ENCODE measurements at regions of chr16 and their contacts with region 1.

Region 1: DNA sequence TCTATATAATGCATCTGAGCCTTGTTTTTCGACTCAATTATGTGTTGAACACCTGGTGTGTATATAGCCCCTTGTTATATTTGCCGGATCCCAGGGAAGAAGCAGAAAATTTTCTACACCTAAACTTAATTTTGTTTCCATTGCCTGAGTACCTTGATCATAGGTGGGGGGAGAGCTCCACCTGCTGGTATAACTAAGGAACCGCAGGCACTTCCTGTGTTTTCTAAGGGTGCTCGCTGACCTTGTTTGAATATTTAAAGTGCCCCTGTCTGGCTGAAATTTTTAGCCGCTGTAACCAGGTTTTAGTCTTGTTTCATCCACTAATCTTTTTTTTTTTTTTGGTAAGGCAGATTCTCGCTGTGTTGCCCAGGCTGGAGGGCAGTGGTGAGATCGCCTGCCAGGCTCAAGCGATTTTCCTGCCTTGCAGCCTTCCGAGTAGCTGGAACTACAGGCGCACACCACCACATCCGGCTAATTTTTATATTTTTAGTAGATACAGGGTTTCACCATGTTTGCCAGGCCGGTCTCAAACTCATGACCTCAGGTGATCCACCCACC is 6.5 kb upstream of the NUBP1 start:
- DNase-seq: peak; percentile 74
- ATAC-seq: peak; percentile 70
- H3K4me3 ChIP-seq: peak overlapping the region; percentile 60
- H3K27ac ChIP-seq: no peak overlapping the region
- H3K4me1 ChIP-seq: peaks cover 13% of the 10 kb centered on the region
- H3K27me3 ChIP-seq: no peaks in the 10 kb centered on the region
- CTCF ChIP-seq: peak; percentile 83

Region 2: GRCh38 chr16:10314811-10315210 is 422.3 kb before region 1 on chr16:
- CTCF ChIA-PET with region 1: no interaction called
- POLR2A ChIA-PET with region 1: no interaction called
- intact Hi-C with region 1: loop called (anchors 5 kb)
- DNase-seq: peak; percentile 36
- ATAC-seq: peak; percentile 27; the same call in 1 of the 2 replicates
- H3K4me3 ChIP-seq: no peak overlapping the region
- H3K27ac ChIP-seq: no peak overlapping the region
- H3K4me1 ChIP-seq: no peaks in the 10 kb centered on the region
- H3K27me3 ChIP-seq: no peaks in the 10 kb centered on the region
- CTCF ChIP-seq: peak; percentile 48

Region 3: DNA sequence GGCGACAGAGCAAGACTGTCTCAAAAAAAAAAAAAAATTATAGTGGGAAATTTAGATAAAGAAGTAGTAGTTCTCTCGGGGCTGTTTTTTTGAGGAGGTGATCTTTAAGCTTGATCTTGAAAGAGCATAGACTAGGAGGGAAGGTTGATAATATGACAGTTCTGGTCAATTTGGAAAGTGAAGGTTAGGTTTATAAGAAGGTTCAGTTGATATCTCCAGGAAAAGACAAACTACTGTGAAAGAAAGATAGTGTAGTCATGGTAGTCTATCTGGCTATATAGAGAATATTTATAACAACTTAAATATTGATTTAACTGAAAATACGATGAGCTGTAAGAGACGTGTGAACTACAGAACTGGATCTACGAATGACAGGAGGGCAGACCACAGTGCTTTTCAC is 348.2 kb before region 1 on chr16:
- CTCF ChIA-PET with region 1: no interaction called
- POLR2A ChIA-PET with region 1: interaction called, 15 read pairs
- intact Hi-C with region 1: no loop called
- DNase-seq: no peak
- ATAC-seq: no peak
- H3K4me3 ChIP-seq: no peak overlapping the region
- H3K27ac ChIP-seq: no peak overlapping the region
- H3K4me1 ChIP-seq: no peaks in the 10 kb centered on the region
- H3K27me3 ChIP-seq: no peaks in the 10 kb centered on the region
- CTCF ChIP-seq: no peak

Region 4: DNA sequence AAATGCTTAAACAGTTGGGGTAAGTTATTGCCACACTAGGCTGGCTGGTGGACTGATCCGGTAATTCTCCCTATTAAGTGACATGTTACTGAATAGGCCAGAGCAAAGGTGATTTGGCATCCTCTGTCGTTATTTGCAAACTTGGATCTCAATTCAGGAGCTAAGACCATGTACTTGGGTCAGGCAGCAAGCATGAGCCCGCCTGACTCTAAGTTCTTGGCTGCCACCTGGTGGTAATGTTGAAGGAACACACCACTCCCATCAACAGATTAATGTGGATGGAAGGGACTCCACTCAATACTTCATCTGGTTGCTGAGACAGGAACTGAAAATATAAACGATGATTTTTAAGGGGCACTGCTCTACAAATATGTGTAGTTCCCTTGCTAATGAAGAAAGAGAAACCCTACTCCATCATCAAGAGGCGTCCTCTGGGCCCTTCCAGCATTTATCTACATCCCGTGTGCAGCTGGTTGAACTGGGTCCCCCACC is 227.6 kb before region 1 on chr16:
- CTCF ChIA-PET with region 1: interaction called, 12 read pairs
- POLR2A ChIA-PET with region 1: no interaction called
- intact Hi-C with region 1: loop called (anchors 1 kb)
- DNase-seq: peak; percentile 78
- ATAC-seq: peak; percentile 89
- H3K4me3 ChIP-seq: no peak overlapping the region
- H3K27ac ChIP-seq: no peak overlapping the region
- H3K4me1 ChIP-seq: peaks cover 18% of the 10 kb centered on the region
- H3K27me3 ChIP-seq: no peaks in the 10 kb centered on the region
- CTCF ChIP-seq: peak; percentile 74

Region 5: DNA sequence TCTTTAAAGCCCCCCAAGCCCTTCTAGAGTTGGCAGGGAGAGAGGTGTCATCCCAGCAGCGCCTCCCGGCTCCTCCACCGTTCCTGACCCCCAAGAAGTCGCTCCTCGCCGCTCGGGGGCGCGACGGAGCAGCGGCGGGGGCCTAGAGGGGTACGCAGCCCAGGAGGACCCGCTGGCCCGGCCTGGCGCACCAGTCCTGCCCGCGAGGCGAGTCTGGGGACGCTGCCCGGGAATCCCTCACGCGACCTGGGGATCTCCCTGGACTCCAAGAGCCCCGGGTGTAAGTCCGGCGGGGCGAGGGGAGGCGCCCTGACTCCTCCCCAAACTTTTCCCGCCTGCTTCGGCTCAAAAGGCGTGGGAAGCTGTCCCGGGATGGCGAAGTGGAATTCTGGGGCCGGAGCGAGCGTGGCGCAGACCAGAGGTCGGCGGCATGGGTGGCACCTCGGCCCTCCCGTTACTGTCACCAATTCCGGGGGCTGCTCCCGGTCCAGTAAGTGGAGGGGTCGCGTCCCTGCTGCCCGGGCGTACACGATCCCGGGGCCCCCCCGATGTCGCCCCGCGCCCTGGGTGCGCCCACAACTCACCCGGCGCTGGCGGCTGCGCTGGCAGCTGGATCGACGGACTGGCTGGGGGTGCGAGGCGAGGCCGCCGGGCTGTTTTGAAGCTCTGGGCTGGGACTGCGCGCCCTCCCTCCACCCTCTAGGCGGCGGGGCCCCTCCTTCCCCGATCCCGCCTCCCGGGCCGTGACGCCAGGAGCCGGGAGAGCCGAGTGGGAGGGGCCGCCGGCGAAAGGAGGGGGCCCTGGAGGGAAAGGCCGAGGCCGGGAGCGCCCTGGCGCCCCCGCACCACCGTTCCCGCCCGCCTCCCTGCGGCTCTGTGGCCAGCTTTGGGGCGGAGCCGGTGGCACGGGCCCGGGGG is 156.9 kb before region 1 on chr16 and contains the start of gene EMP2:
- CTCF ChIA-PET with region 1: interaction called, 3 read pairs
- POLR2A ChIA-PET with region 1: no interaction called
- intact Hi-C with region 1: loop called (anchors 2 kb)
- DNase-seq: peak; percentile 76
- ATAC-seq: peak; percentile 66
- H3K4me3 ChIP-seq: peak within 1 kb of the TSS; percentile 89
- H3K27ac ChIP-seq: peak within 1 kb of the TSS; percentile 84
- H3K4me1 ChIP-seq: peaks cover 48% of the 10 kb centered on the region
- H3K27me3 ChIP-seq: no peaks in the 10 kb centered on the region
- CTCF ChIP-seq: peak; percentile 67
- total RNA-seq, gene EMP2: 33.9 and 38.7 TPM in 2 replicates

Region 6: GRCh38 chr16:10668322-10669045 is 68.7 kb before region 1 on chr16:
- CTCF ChIA-PET with region 1: interaction called, 9 read pairs
- POLR2A ChIA-PET with region 1: no interaction called
- intact Hi-C with region 1: loop called (anchors 2 kb)
- DNase-seq: peak; percentile 45
- ATAC-seq: peak; percentile 88
- H3K4me3 ChIP-seq: no peak overlapping the region
- H3K27ac ChIP-seq: no peak overlapping the region
- H3K4me1 ChIP-seq: no peaks in the 10 kb centered on the region
- H3K27me3 ChIP-seq: no peaks in the 10 kb centered on the region
- CTCF ChIP-seq: peak; percentile 60

Region 7: GRCh38 chr16:10765772-10766171 is 28.6 kb after region 1 on chr16:
- CTCF ChIA-PET with region 1: no interaction called
- POLR2A ChIA-PET with region 1: no interaction called
- intact Hi-C with region 1: no loop called
- DNase-seq: no peak
- ATAC-seq: no peak
- H3K4me3 ChIP-seq: no peak overlapping the region
- H3K27ac ChIP-seq: no peak overlapping the region
- H3K4me1 ChIP-seq: no peaks in the 10 kb centered on the region
- H3K27me3 ChIP-seq: no peaks in the 10 kb centered on the region
- CTCF ChIP-seq: no peak

Region 8: DNA sequence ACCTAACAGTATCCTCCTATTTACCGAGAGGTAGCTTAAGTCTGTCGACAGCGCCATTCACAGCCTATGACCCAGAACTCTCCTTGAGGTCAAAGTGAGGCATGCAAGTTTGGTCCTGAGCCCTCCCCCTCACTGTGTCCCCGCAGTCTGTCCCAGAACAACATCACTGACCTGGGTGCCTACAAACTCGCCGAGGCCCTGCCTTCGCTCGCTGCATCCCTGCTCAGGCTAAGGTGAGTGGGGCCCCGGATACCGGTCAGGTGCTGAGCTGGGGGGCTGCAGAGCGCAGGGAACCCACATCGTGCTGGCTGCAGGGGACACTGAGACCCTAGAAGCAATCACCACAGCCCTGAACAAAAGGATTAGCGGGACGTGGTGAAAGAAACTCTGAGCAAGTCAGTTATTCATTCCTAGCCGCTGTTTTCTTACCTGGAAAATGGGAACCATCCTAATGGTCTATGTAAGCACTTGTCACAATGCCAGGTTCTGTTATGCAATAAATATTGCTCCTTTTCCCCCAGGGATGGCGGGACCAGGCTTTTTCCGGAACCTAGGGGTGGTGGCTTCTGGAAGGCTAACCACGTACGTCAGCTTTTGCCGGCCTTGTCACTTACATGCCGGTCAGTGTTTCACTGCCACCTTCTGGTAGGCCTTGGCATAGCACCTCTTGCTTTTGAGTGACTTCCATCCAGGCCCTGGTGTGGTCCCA is 181.3 kb after region 1 on chr16:
- CTCF ChIA-PET with region 1: no interaction called
- POLR2A ChIA-PET with region 1: no interaction called
- intact Hi-C with region 1: loop called (anchors 5 kb)
- DNase-seq: peak; percentile 95
- ATAC-seq: peak; percentile 95
- H3K4me3 ChIP-seq: no peak overlapping the region
- H3K27ac ChIP-seq: no peak overlapping the region
- H3K4me1 ChIP-seq: no peaks in the 10 kb centered on the region
- H3K27me3 ChIP-seq: no peaks in the 10 kb centered on the region
- CTCF ChIP-seq: peak; percentile 82